Tibial artery (tissue), 4 donors: ENCODE measurements at regions of chr1 and their contacts with region 1.

Region 1: DNA sequence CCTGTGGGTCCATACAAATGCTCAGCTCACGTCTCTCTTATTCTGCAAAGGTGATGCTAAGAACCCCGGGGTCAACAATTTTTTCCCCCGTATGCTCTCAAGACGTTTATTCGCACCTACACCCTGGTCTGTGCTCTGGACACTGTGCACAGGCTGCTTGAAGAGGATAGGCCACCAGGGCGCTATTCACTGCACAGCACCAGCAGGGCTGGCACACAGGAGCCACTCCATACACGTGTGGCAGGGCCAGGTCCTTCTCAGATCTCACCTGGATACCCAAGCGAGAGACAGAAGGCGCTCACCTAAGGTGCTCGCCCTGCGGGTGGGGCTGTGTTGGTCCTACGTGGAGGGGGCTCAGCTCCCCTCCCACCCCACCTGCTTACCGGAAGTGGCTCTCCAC is 16.7 kb downstream of the TMEM63A start:
- DNase-seq: no peak
- H3K4me3 ChIP-seq: no peak overlapping the region
- H3K27ac ChIP-seq: no peak overlapping the region
- H3K4me1 ChIP-seq: peaks cover 0 to 17% (median 2%) of the 10 kb centered on the region in 4 donors
- H3K27me3 ChIP-seq: no peaks in the 10 kb centered on the region
- CTCF ChIP-seq: no peak

Region 2: GRCh38 chr1:225879501-225880221 is 14.1 kb after region 1 on chr1:
- intact Hi-C with region 1: loop called (anchors 2 kb)
- DNase-seq: no peak
- H3K4me3 ChIP-seq: peak overlapping the region in 1 of 2 donors; percentile 73
- H3K27ac ChIP-seq: peak overlapping the region; percentile 87 to 94
- H3K4me1 ChIP-seq: peaks cover 3 to 54% (median 50%) of the 10 kb centered on the region in 4 donors
- H3K27me3 ChIP-seq: no peaks in the 10 kb centered on the region
- CTCF ChIP-seq: no peak